OCI-LY7 (cell line): ENCODE measurements at regions of chr2 and their contacts with region 1.

Region 1: DNA sequence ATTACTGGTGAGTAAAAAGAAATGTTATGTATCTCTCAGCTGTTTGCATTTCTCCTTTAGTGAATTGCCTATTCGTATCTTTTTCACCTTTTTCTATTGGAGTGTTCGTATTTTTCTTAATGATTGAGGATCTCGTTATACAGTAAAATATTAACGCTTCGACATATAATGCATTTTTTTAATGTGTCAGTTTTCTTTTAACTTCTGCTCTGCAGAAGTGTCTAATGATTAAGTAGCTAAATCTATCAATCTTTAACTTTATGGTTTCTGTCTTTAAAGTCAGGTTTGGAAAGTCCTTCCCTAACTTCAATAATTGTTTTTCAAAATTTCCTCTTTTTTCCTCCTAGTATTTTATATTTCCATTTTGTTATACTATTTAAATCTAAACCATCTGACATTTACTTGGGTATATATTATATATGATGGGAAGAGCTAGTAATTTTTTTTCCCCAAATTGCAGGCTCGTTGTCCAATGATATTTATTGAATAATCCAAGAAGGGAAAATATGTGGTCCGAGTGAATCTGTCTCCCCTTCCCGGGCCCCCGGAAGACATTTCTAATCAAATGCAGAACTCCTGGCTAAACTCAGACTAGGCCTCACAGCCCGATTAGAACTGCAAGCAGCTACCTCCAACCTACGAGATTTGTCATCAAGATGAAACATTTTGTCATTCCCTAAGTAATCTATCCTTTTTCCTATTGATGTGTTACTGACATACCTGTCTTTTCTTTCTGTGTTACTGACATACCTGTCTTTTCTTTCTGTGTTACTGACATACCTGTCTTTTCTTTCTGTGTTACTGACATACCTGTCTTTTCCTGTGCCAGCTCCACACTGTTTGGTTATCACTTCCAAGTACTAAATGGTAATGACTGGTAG is 17.2 kb downstream of the PCBP1 start:
- DNase-seq: peak; percentile 83
- H3K4me3 ChIP-seq: peak overlapping the region; percentile 61
- H3K27ac ChIP-seq: peak overlapping the region; percentile 88
- H3K4me1 ChIP-seq: peaks cover 64% of the 10 kb centered on the region
- CTCF ChIP-seq: no peak

Region 2: GRCh38 chr2:70115646-70116442 is 11.4 kb after region 1 on chr2:
- CTCF ChIA-PET with region 1: no interaction called
- POLR2A ChIA-PET with region 1: interaction called, 33 read pairs
- intact Hi-C with region 1: loop called (anchors 1 kb)
- DNase-seq: no peak
- H3K4me3 ChIP-seq: no peak overlapping the region
- H3K27ac ChIP-seq: no peak overlapping the region
- H3K4me1 ChIP-seq: peaks cover 61% of the 10 kb centered on the region
- CTCF ChIP-seq: no peak

Region 3: GRCh38 chr2:70124983-70125480 is 20.6 kb after region 1 on chr2:
- CTCF ChIA-PET with region 1: interaction called, 3 read pairs
- POLR2A ChIA-PET with region 1: interaction called, 33 read pairs
- intact Hi-C with region 1: loop called (anchors 1 kb)
- DNase-seq: peak; percentile 65
- H3K4me3 ChIP-seq: peak overlapping the region; percentile 63
- H3K27ac ChIP-seq: peak overlapping the region; percentile 83
- H3K4me1 ChIP-seq: peaks cover 89% of the 10 kb centered on the region
- CTCF ChIP-seq: no peak

Region 4: DNA sequence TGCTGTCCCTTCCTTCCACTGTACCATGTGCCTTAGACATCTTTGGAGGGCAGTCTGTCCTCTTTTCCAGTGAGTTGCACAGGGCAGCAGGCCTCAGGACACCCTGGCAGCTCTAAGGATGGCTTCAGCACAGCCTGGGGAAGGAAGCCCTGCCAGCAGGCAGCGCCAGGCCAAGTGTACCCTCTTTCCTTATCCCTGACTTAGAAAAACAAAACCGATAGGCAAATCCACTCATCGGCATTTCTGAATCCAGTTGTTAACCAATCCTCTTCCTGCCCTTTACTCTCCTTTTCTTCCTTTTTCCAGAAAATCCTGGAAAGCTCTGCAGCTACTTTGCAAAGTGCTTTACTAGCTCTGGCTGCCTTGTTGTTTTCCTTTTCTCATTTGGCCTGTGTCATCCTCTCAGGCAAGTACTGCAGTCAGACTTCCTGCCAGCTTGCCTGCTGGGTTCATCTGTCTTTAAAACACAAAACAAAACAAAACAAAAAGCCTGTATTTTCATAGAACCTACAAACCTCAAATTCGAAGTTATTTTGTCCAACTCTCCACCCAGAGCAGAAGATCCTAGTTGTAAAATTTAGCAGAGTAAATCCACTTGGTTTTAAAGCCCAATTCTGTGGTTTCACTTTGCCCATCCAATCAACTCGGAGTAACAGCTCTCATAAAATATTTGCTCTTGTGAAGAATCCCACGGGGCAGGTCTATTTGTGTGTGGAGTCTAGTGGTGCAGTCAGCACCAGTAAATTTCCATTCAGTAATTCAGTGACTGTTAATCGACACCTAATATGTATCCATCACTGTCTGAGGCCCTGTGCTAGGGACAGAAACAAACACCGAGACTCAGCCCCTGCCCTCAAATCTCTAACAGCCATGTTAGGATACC is 28.0 kb after region 1 on chr2:
- CTCF ChIA-PET with region 1: interaction called, 6 read pairs
- POLR2A ChIA-PET with region 1: interaction called, 29 read pairs
- intact Hi-C with region 1: no loop called
- DNase-seq: peak; percentile 73
- H3K4me3 ChIP-seq: peak overlapping the region; percentile 67
- H3K27ac ChIP-seq: peak overlapping the region; percentile 93
- H3K4me1 ChIP-seq: peaks cover 80% of the 10 kb centered on the region
- CTCF ChIP-seq: 0 out of 2 replicates have a peak, but pooled peaks have one; percentile 22